ENCODE measurements at regions of chr6 and their contacts with region 1.

Region 1: GRCh38 chr6:152124429-152125074 is 317.1 kb downstream of the ESR1 start:
- DNase-seq: peak; percentile 62
- H3K4me3 ChIP-seq: no peak overlapping the region
- CTCF ChIP-seq: peak; percentile 74

Region 2: GRCh38 chr6:151765444-151765886 is 359.1 kb before region 1 on chr6:
- in situ Hi-C with region 1: loop called (anchors 25 kb)
- DNase-seq: peak; percentile 76
- H3K4me3 ChIP-seq: no peak overlapping the region
- CTCF ChIP-seq: peak; percentile 72